Naive thymus-derived CD4-positive, alpha-beta T cell (primary cell): ENCODE measurements at regions of chr11 and their contacts with region 1.

Region 1: GRCh38 chr11:82906244-82906654 is 4.7 kb downstream of the DDIAS start:
- DNase-seq: peak in 6 of 9 donors; percentile 19 to 60 (median 48)
- ATAC-seq: no peak
- H3K4me3 ChIP-seq: no peak overlapping the region
- H3K4me3 Mint-ChIP-seq: peak overlapping the region in 4 of 10 donors; percentile 5 to 49 (median 20)
- H3K27ac ChIP-seq: no peak overlapping the region
- H3K27ac Mint-ChIP-seq: peak overlapping the region in 6 of 9 donors; percentile 27 to 70 (median 56)
- H3K4me1 ChIP-seq: peaks cover 6 to 18% of the 10 kb centered on the region in 2 donors
- H3K4me1 Mint-ChIP-seq: peaks cover 19 to 58% (median 31%) of the 10 kb centered on the region in 7 donors
- H3K27me3 ChIP-seq: no peaks in the 10 kb centered on the region
- H3K27me3 Mint-ChIP-seq: no peaks in the 10 kb centered on the region

Region 2: GRCh38 chr11:82927254-82927880 is 21.1 kb after region 1 on chr11:
- CTCF ChIA-PET with region 1: interaction called, 4 read pairs
- POLR2A ChIA-PET with region 1: interaction called, 7 read pairs
- intact Hi-C with region 1: loop called (anchors 1 kb)
- DNase-seq: peak in 7 of 9 donors; percentile 51 to 77 (median 67)
- ATAC-seq: peak; percentile 89
- H3K4me3 ChIP-seq: no peak overlapping the region
- H3K4me3 Mint-ChIP-seq: peak overlapping the region in 2 of 10 donors; percentile 10 to 63
- H3K27ac ChIP-seq: no peak overlapping the region
- H3K27ac Mint-ChIP-seq: peak overlapping the region in 8 of 9 donors; percentile 26 to 76 (median 52)
- H3K4me1 ChIP-seq: peaks cover 0 to 23% of the 10 kb centered on the region in 2 donors
- H3K4me1 Mint-ChIP-seq: peaks cover 10 to 55% (median 45%) of the 10 kb centered on the region in 7 donors
- H3K27me3 ChIP-seq: no peaks in the 10 kb centered on the region
- H3K27me3 Mint-ChIP-seq: no peaks in the 10 kb centered on the region

Region 3: GRCh38 chr11:82988936-82989627 is 82.8 kb after region 1 on chr11:
- CTCF ChIA-PET with region 1: interaction called, 27 read pairs
- POLR2A ChIA-PET with region 1: interaction called, 3 read pairs
- intact Hi-C with region 1: loop called (anchors 1 kb)
- DNase-seq: no peak
- ATAC-seq: no peak
- H3K4me3 ChIP-seq: no peak overlapping the region
- H3K4me3 Mint-ChIP-seq: peak overlapping the region in 1 of 10 donors; percentile 13
- H3K27ac ChIP-seq: no peak overlapping the region
- H3K27ac Mint-ChIP-seq: peak overlapping the region in 4 of 9 donors; percentile 22 to 69 (median 32)
- H3K4me1 ChIP-seq: peaks cover 0 to 4% of the 10 kb centered on the region in 2 donors
- H3K4me1 Mint-ChIP-seq: peaks cover 1 to 24% (median 15%) of the 10 kb centered on the region in 7 donors
- H3K27me3 ChIP-seq: no peaks in the 10 kb centered on the region
- H3K27me3 Mint-ChIP-seq: no peaks in the 10 kb centered on the region

Region 4: DNA sequence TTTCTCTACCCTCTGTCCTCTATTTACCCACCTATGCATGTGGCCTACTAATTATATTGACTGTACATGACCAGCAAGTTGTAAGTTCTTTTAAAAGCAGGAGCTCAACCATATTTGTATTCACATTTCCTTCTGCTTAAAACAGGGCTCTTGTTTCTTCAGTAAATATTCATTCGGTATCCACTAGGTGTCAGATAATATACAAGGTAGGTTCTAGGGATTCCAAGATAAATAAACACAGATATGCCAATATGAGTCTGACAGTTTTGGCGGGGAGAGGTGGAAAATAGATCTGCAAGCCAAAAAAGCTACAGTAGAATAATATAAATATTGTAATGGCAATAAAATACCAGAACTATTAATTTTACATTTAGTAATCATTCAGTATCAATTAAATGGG is 180.8 kb after region 1 on chr11:
- CTCF ChIA-PET with region 1: no interaction called
- POLR2A ChIA-PET with region 1: no interaction called
- intact Hi-C with region 1: loop called in 1 of 2 experiments (anchors 5 kb)
- DNase-seq: no peak
- ATAC-seq: no peak
- H3K4me3 ChIP-seq: no peak overlapping the region
- H3K4me3 Mint-ChIP-seq: no peak overlapping the region
- H3K27ac ChIP-seq: peak overlapping the region; percentile 10
- H3K27ac Mint-ChIP-seq: peak overlapping the region in 8 of 9 donors; percentile 10 to 74 (median 38)
- H3K4me1 ChIP-seq: peaks cover 0 to 4% of the 10 kb centered on the region in 2 donors
- H3K4me1 Mint-ChIP-seq: peaks cover 8 to 44% (median 32%) of the 10 kb centered on the region in 7 donors
- H3K27me3 ChIP-seq: no peaks in the 10 kb centered on the region
- H3K27me3 Mint-ChIP-seq: no peaks in the 10 kb centered on the region

Region 5: DNA sequence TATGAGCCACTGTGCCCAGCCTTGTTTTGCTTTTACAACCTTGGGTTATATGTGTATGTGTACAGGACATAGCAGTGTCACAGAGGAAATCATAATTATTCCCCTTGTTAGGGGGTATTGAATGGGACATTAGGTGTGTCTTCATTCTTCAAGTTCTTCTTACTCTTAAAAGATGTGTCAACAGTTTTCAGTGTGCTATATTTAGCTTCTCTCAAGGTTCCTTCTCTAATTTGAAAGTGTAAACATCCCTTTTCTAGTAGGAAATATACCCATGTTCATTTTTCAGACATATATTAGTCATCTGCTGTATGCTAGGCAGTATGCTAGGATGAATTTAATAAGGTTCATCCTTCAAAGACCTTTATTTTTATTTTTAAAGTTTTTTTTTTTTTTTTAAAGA is 267.8 kb after region 1 on chr11:
- CTCF ChIA-PET with region 1: no interaction called
- POLR2A ChIA-PET with region 1: interaction called, 4 read pairs
- intact Hi-C with region 1: loop called in 1 of 2 experiments (anchors 5 kb)
- DNase-seq: no peak
- ATAC-seq: peak; percentile 37
- H3K4me3 ChIP-seq: no peak overlapping the region
- H3K4me3 Mint-ChIP-seq: peak overlapping the region in 9 of 10 donors; percentile 2 to 85 (median 55)
- H3K27ac ChIP-seq: no peak overlapping the region
- H3K27ac Mint-ChIP-seq: peak overlapping the region in 3 of 9 donors; percentile 33 to 76 (median 36)
- H3K4me1 ChIP-seq: peaks cover 39 to 51% of the 10 kb centered on the region in 2 donors
- H3K4me1 Mint-ChIP-seq: peaks cover 36 to 85% (median 72%) of the 10 kb centered on the region in 7 donors
- H3K27me3 ChIP-seq: no peaks in the 10 kb centered on the region
- H3K27me3 Mint-ChIP-seq: no peaks in the 10 kb centered on the region

Region 6: GRCh38 chr11:83249972-83250593 is 343.8 kb after region 1 on chr11:
- CTCF ChIA-PET with region 1: interaction called, 15 read pairs
- POLR2A ChIA-PET with region 1: interaction called, 5 read pairs
- intact Hi-C with region 1: loop called (anchors 1 kb)
- DNase-seq: peak in 7 of 9 donors; percentile 12 to 48 (median 40)
- ATAC-seq: peak; percentile 77
- H3K4me3 ChIP-seq: no peak overlapping the region
- H3K4me3 Mint-ChIP-seq: peak overlapping the region in 1 of 10 donors; percentile 32
- H3K27ac ChIP-seq: no peak overlapping the region
- H3K27ac Mint-ChIP-seq: no peak overlapping the region
- H3K4me1 ChIP-seq: no peaks in the 10 kb centered on the region
- H3K4me1 Mint-ChIP-seq: peaks cover 0 to 7% (median 0%) of the 10 kb centered on the region in 7 donors
- H3K27me3 ChIP-seq: no peaks in the 10 kb centered on the region
- H3K27me3 Mint-ChIP-seq: no peaks in the 10 kb centered on the region

Region 7: GRCh38 chr11:83819933-83820549 is 913.8 kb after region 1 on chr11:
- CTCF ChIA-PET with region 1: no interaction called
- POLR2A ChIA-PET with region 1: no interaction called
- intact Hi-C with region 1: loop called in 1 of 2 experiments (anchors 1 kb)
- DNase-seq: peak in 5 of 9 donors; percentile 3 to 13 (median 10)
- ATAC-seq: no peak
- H3K4me3 ChIP-seq: no peak overlapping the region
- H3K4me3 Mint-ChIP-seq: no peak overlapping the region
- H3K27ac ChIP-seq: no peak overlapping the region
- H3K27ac Mint-ChIP-seq: no peak overlapping the region
- H3K4me1 ChIP-seq: no peaks in the 10 kb centered on the region
- H3K4me1 Mint-ChIP-seq: no peaks in the 10 kb centered on the region
- H3K27me3 ChIP-seq: no peaks in the 10 kb centered on the region
- H3K27me3 Mint-ChIP-seq: peaks cover 0 to 4% (median 3%) of the 10 kb centered on the region in 5 donors